PC-3 (cell line): ENCODE measurements at regions of chr5 and their contacts with region 1.

Region 1: DNA sequence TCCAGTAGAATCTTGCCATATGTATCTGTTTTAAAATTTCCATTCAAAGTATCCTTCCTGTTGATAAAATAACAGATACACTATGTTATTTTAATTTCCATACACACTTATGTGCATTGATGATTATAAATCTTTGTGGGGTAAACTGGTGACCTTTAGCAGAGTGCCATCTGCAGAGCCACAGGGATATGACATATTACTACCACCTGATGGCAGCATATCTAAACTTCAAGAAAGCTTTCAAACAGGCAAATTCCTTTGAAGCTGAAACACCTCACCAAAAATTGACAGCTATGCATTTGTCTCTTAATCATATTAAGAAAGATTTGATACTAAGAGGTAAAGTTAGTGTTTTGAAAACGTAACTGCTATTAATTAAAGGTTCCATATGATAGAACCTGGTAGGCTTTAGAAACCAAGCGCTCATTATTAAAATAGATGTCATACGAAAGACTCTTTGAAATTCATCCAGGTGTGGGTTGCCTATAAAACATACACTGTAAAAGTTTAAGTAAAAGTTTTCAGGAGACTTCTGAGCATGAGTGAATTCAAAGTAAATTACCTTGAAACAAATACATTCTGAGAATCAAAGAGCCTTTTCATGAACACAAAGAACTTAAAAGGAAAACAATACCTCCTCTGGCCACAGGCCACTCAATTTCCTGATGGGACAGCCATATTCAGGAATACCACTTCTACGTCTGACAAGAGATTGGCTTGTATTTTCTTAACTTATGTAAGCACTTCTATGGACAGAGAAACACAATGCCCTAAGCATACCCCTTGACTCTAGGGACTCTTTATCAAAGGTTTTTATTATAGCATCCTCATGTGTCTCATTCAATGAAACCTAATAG is 93.3 kb downstream of the KIAA0825 start:
- DNase-seq: peak; percentile 53
- ATAC-seq: peak; percentile 65
- H3K4me3 ChIP-seq: no peak overlapping the region
- H3K27ac ChIP-seq: no peak overlapping the region
- H3K4me1 ChIP-seq: peaks cover 16% of the 10 kb centered on the region
- H3K27me3 ChIP-seq: no peaks in the 10 kb centered on the region
- CTCF ChIP-seq: peak; percentile 73

Region 2: GRCh38 chr5:94111209-94112004 is 413.7 kb before region 1 on chr5:
- CTCF ChIA-PET with region 1: no interaction called
- POLR2A ChIA-PET with region 1: no interaction called
- intact Hi-C with region 1: loop called (anchors 5 kb)
- DNase-seq: peak; percentile 92
- ATAC-seq: peak; percentile 95
- H3K4me3 ChIP-seq: peak overlapping the region; percentile 89
- H3K27ac ChIP-seq: peak overlapping the region; percentile 63
- H3K4me1 ChIP-seq: peaks cover 13% of the 10 kb centered on the region
- H3K27me3 ChIP-seq: no peaks in the 10 kb centered on the region
- CTCF ChIP-seq: no peak

Region 3: DNA sequence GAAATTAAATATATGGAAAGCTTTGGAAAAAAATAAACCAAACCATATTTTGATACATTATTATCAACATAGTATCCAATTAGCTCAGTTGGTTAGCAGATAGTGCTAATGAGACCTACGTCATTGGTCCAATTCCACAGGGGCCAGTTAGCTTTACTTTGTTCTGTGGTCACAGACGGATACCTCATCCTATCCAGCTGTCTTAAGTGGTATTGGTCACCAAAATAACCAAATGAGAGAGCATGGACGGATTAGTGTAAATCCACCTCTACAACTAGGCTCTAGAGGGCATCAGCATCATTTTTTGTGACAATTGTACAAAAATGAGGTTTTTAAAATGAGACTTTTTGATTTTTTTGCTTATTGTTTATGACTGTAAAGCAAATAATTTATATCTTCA is 270.9 kb before region 1 on chr5:
- CTCF ChIA-PET with region 1: no interaction called
- POLR2A ChIA-PET with region 1: no interaction called
- intact Hi-C with region 1: loop called (anchors 10 kb)
- DNase-seq: no peak
- ATAC-seq: peak; percentile 42; the same call in 1 of the 2 replicates
- H3K4me3 ChIP-seq: no peak overlapping the region
- H3K27ac ChIP-seq: no peak overlapping the region
- H3K4me1 ChIP-seq: no peaks in the 10 kb centered on the region
- H3K27me3 ChIP-seq: no peaks in the 10 kb centered on the region
- CTCF ChIP-seq: peak; percentile 29; the same call in 1 of the 2 replicates

Region 4: GRCh38 chr5:94481059-94481458 is 44.0 kb before region 1 on chr5:
- CTCF ChIA-PET with region 1: no interaction called
- POLR2A ChIA-PET with region 1: no interaction called
- intact Hi-C with region 1: no loop called
- DNase-seq: no peak
- ATAC-seq: no peak
- H3K4me3 ChIP-seq: no peak overlapping the region
- H3K27ac ChIP-seq: no peak overlapping the region
- H3K4me1 ChIP-seq: no peaks in the 10 kb centered on the region
- H3K27me3 ChIP-seq: no peaks in the 10 kb centered on the region
- CTCF ChIP-seq: no peak

Region 5: DNA sequence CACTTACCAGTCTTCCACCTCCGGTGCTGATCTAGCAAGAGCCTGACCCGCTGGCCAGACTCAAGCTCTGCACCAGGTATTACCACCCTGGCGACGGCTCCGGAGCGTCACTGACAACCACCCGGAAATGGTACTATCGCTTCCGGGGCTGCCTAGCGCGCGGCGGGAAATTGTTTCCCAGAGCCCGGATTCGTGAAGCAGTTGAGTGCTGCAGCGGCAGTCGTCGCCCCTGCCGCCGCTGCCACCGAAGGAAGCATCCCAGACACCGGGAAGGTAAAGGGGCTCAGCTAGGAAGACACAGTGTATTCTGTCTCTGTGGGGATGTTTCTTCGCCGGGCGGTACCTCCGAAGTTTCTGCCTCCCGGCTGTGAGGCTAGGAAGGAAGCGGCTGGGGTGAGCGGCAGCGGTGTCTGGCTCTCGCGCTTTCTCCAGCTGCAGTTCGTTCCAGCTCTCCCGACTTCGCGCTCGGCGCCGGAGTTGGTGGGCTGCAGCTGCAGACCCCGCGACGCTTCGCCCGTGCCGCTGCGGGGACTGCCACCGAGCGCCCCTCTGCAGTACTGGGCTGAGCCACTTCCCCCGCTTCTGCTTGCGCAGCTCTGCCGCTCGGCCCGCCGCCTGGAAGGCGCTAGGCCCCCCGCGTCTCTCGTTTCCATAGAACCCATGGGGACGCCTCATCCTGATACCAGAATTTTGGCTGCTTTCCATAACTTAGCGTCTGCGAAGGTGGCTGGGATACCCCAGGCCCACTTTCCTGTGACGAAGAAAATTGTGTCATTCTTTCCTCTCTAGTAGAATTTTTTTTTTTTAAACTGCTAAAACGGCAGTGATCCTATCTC is 93.6 kb after region 1 on chr5 and contains the starts of genes KIAA0825 and SLF1:
- CTCF ChIA-PET with region 1: no interaction called
- POLR2A ChIA-PET with region 1: no interaction called
- intact Hi-C with region 1: loop called (anchors 5 kb)
- DNase-seq: peak; percentile 84
- ATAC-seq: peak; percentile 97
- H3K4me3 ChIP-seq: peak within 1 kb of the TSS; percentile 81
- H3K27ac ChIP-seq: peak within 1 kb of the TSS; percentile 60
- H3K4me1 ChIP-seq: peaks cover 7% of the 10 kb centered on the region
- H3K27me3 ChIP-seq: no peaks in the 10 kb centered on the region
- CTCF ChIP-seq: no peak
- total RNA-seq, gene KIAA0825: 0.07 and 0.23 TPM in 2 replicates
- total RNA-seq, gene SLF1: 23.6 and 27.8 TPM in 2 replicates

Region 6: GRCh38 chr5:94740286-94740685 is 215.2 kb after region 1 on chr5:
- CTCF ChIA-PET with region 1: interaction called, 13 read pairs
- POLR2A ChIA-PET with region 1: no interaction called
- intact Hi-C with region 1: loop called (anchors 2 kb)
- DNase-seq: no peak
- ATAC-seq: no peak
- H3K4me3 ChIP-seq: no peak overlapping the region
- H3K27ac ChIP-seq: no peak overlapping the region
- H3K4me1 ChIP-seq: no peaks in the 10 kb centered on the region
- H3K27me3 ChIP-seq: no peaks in the 10 kb centered on the region
- CTCF ChIP-seq: no peak